Activated naive CD8-positive, alpha-beta T cell treated with anti-CD3 and anti-CD28 coated beads, Interleukin-2, amount 10 ng/mL, durations not matched to agents 7 days and 5 days (primary cell): ENCODE measurements at regions of chrX and their contacts with region 1.

Region 1: GRCh38 chrX:13697976-13698375 is 9.0 kb downstream of the RAB9A start:
- DNase-seq: no peak
- ATAC-seq: no peak
- H3K4me3 Mint-ChIP-seq: no peak overlapping the region
- H3K27ac Mint-ChIP-seq: no peak overlapping the region
- H3K4me1 Mint-ChIP-seq: peaks cover 31% of the 10 kb centered on the region
- H3K27me3 Mint-ChIP-seq: no peaks in the 10 kb centered on the region

Region 2: DNA sequence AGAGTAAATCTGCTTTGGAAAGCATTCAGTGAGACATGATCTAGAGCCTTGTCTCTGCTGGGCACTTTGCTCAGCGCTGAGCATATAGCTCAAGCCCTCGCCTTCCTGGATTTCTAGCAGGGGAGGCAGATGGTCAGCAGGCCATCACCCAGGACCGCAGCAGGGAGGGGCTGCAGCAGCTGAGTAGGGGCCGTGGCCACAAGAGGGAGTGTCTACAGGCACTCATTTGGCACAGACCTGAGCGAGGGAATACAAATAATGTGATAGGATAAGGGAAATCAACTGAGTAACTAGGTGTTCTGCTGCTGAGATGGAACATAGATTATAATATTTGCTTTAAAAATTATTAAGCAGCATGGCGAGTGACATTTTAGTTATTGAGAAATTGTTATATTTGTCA is 66.8 kb after region 1 on chrX:
- POLR2A ChIA-PET with region 1: interaction called, 11 read pairs
- DNase-seq: no peak
- ATAC-seq: no peak
- H3K4me3 Mint-ChIP-seq: no peak overlapping the region
- H3K27ac Mint-ChIP-seq: no peak overlapping the region
- H3K4me1 Mint-ChIP-seq: no peaks in the 10 kb centered on the region
- H3K27me3 Mint-ChIP-seq: no peaks in the 10 kb centered on the region

Region 3: DNA sequence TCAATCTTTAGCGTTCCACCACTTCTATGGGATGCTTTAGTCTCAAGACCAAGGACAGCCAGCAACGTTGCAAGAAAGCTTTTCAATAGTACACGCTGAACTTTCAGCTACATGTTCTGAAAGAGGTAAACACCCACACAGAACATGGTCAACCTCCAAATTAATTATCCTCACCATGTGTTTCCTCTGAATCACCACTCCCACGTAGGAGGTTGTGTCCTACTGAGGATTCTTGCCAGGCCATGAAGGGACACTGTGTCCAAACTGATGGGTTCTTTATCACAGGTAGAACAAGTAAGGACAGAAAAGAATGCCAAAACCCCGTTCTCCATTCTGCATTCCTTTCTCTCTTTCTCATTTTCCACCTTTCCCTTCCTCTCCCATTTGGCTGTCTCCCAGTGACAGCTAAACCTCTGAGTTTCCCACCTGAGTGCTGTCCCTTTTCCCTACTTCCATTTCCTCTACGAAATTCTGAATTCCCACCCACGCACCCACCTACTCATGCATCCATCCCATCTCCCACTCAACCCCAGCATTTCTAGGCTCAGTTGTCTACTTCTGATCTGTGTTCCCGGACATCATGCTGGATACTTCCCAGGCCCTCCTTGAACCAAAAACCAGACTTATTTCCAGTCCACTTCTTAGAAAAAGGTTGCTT is 147.9 kb after region 1 on chrX:
- POLR2A ChIA-PET with region 1: no interaction called
- DNase-seq: no peak
- ATAC-seq: no peak
- H3K4me3 Mint-ChIP-seq: no peak overlapping the region
- H3K27ac Mint-ChIP-seq: no peak overlapping the region
- H3K4me1 Mint-ChIP-seq: no peaks in the 10 kb centered on the region
- H3K27me3 Mint-ChIP-seq: peaks cover 3% of the 10 kb centered on the region